Activated CD4-positive, alpha-beta T cell treated with anti-CD3 and anti-CD28 coated beads, Interleukin-2, amount 10 ng/mL, durations not matched to agents 24 days and 14 days (primary cell): ENCODE measurements at regions of chr22 and their contacts with region 1.

Region 1: DNA sequence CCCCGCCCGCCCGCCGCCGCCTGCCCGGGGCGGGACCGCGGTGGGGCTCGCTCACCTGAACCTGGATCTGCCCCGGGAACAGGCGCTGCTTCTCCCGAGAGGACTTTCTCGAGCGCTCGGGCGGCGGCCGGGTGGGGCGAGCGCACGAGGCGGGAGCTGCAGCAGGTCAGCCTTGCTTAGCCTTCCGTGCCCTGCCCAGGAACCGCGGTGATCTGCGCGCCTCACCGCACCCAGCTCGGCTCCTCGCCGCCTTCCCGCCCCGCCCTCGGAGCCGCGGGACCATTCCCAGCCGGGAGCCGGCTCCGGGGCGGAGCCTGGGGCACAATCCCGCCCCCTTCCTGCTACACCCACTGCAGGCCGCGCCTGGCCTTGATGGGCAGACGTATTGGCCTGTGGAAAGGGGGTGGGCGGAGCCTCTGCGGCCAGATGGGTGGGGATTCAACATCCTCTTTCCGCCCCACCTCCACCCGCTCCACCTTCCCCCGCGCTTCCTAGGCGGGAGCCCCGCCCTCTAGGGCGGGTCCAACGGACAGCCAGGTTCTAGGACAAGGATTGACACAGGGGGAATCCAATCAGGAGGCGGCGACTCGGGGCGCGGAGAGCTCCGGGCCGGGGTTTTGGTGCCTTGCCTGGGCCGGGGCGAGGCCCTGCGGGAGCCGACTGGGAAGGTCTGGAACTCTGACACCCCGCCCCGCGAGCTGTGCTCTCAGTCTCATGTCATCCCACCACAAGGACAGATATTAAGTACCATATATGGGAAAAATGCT is at the start of gene MYH9:
- DNase-seq: peak; percentile 100
- H3K4me3 Mint-ChIP-seq: peak within 1 kb of the TSS; percentile 95
- H3K27ac Mint-ChIP-seq: peak within 1 kb of the TSS; percentile 97
- H3K4me1 Mint-ChIP-seq: peaks cover 36% of the 10 kb centered on the region
- H3K27me3 Mint-ChIP-seq: no peaks in the 10 kb centered on the region
- total RNA-seq, gene MYH9: 625 and 633 TPM in 2 replicates

Region 2: DNA sequence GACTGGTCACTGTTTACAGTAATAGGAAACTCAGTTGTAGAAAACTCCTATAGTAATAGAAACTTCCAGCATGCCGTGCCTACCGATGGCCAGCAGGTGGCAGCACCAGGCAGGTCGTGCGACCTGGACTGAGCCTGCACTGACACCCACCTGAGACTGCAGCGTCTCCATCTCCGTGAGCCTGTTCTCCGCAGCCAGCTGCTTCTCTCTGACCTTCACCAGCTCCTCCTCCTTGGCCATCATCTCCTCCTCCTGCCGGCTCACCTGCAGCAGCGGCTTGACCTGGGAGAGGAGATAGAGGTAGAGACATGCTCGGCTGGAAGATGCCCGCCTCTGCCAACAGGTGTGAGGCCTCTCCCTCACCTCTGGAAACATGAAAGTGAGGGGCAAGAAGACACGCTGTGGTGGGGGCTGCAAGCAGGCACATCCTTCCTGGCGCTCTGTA is 86.5 kb before region 1 on chr22:
- intact Hi-C with region 1: loop called (anchors 1 kb)
- DNase-seq: peak; percentile 94
- H3K4me3 Mint-ChIP-seq: no peak overlapping the region
- H3K27ac Mint-ChIP-seq: peak overlapping the region; percentile 34
- H3K4me1 Mint-ChIP-seq: peaks cover 8% of the 10 kb centered on the region
- H3K27me3 Mint-ChIP-seq: no peaks in the 10 kb centered on the region

Region 3: GRCh38 chr22:36365020-36365411 is 22.9 kb before region 1 on chr22:
- intact Hi-C with region 1: loop called (anchors 1 kb)
- DNase-seq: peak; percentile 95
- H3K4me3 Mint-ChIP-seq: peak overlapping the region; percentile 79
- H3K27ac Mint-ChIP-seq: peak overlapping the region; percentile 89
- H3K4me1 Mint-ChIP-seq: peaks cover 83% of the 10 kb centered on the region
- H3K27me3 Mint-ChIP-seq: no peaks in the 10 kb centered on the region

Region 4: DNA sequence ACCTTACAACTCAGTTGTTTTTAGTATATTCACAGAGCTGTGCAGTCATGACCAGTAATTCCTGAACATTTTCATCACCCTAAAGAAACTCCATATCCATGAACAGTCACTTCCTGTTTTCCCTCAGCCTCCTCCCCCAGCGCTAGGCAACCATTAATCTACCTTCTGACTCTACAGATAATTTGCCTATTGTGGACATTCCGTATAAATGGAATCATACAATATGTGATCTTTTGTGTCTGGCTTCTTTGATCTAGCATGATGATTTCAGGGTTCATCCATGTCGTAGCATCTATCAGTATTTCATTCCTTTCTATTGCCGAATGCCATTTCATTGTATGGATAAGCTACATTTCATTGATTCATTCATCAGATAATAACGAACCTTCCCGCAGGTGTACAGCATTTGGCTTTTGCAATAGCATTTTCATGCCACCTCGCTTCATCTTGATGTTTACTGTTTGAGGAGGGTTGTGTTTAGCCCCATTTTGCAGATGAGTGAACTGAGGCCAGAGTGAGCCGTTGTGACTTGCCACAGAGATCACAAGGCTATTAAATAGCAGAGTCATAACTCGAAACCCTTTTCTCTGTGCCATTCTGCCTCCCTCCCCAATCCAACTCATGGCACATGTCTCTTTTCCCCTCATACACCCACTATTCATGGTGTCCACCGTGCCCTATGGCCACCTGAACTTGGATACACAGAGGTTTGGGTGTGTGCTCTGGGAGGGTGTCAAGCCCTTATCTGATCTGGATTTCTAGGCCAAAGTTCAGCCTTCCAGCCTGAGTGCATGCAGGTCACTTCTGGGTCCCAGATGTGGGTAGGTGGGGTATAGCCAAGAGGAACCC is 10.9 kb after region 1 on chr22:
- intact Hi-C with region 1: no loop called
- DNase-seq: no peak
- H3K4me3 Mint-ChIP-seq: no peak overlapping the region
- H3K27ac Mint-ChIP-seq: no peak overlapping the region
- H3K4me1 Mint-ChIP-seq: peaks cover 7% of the 10 kb centered on the region
- H3K27me3 Mint-ChIP-seq: no peaks in the 10 kb centered on the region

Region 5: DNA sequence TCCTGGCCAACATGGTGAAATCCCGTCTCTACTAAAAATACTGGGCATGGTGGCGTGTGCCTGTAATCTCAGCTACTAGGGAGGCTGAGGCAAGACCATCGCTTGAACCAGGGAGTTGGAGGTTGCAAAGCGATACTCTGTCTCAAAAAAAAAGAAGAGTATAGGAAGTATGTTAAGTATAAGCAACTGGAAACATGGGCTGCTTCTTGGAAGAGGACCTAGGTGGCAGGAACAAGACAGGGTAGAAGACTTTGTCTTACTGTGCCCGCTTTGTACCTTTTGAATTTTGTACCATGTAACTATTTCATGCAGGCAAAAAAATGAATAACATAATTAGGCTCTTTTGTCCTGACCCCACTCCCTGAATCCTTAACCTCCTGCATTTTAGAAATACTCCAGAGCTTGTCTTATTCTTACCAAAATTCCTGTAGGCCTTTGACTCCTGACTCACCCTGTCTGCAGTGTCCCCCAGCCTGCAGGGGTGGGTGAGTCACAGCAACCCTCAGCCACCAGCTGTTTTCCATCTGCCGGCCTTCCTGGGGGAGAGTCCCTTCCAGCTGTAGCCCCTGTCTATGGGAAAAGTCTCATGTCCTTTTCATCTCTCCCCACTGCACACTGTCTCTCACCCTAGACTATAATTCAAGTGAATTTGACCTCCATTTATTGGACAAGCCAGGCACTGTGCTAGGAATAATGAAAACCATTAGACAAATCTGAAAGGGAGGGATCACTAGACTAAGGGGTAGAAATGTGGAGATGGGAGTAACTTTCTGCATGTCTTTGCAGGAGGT is 51.7 kb after region 1 on chr22:
- intact Hi-C with region 1: loop called (anchors 5 kb)
- DNase-seq: no peak
- H3K4me3 Mint-ChIP-seq: no peak overlapping the region
- H3K27ac Mint-ChIP-seq: no peak overlapping the region
- H3K4me1 Mint-ChIP-seq: peaks cover 32% of the 10 kb centered on the region
- H3K27me3 Mint-ChIP-seq: no peaks in the 10 kb centered on the region

Region 6: GRCh38 chr22:36470162-36470993 is 82.4 kb after region 1 on chr22:
- intact Hi-C with region 1: loop called (anchors 1 kb)
- DNase-seq: peak; percentile 95
- H3K4me3 Mint-ChIP-seq: peak overlapping the region; percentile 23
- H3K27ac Mint-ChIP-seq: peak overlapping the region; percentile 48
- H3K4me1 Mint-ChIP-seq: peaks cover 22% of the 10 kb centered on the region
- H3K27me3 Mint-ChIP-seq: no peaks in the 10 kb centered on the region

Region 7: DNA sequence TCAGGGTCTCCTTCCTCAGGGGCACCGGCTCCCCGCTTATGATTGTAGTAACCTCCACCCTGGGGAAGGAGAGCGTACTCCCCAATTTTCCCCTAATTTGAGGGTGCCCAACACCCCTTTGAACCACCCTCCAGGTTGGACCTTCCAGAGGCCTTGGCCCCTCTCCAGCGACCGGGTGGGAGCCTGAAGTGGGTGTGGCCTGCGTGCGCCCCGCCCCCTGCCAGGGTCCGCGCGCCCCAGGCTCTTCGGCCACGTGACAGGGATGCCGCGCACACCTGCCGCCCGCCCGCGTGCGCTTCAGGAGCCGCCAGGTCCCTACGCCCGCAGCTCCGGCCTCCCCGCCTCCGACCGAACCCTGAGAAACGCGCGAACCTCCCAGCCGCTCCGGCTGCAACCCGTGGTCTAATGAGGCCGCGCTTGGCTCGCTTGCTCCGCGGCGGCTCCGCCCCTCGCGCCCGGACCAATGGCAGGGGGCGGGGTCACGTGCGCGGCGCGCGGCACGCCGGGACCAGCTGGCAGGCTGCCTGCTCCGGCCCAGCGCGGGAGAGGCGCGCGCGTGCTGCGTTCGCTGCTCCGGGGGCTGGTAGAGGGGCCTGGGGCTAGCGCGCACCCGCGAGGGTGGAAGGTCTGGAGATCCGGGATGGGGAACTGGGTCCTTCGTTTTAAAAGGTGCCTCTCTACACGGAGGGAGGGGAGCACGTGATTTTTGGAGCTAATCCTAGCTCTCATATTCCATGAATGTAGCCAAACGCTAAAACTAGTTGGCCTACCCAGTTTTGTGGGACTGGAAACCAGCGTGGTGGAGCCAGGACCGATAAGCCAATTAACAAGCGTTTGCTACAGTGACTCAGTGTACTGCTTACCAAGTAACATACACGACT is 118.9 kb after region 1 on chr22 and contains the start of gene FOXRED2:
- intact Hi-C with region 1: no loop called
- DNase-seq: peak; percentile 98
- H3K4me3 Mint-ChIP-seq: peak within 1 kb of the TSS; percentile 70
- H3K27ac Mint-ChIP-seq: peak within 1 kb of the TSS; percentile 70
- H3K4me1 Mint-ChIP-seq: peaks cover 10% of the 10 kb centered on the region
- H3K27me3 Mint-ChIP-seq: no peaks in the 10 kb centered on the region
- total RNA-seq, gene FOXRED2: 25.4 and 26.3 TPM in 2 replicates

Region 8: GRCh38 chr22:36528795-36529751 is 141.1 kb after region 1 on chr22 and contains the start of gene EIF3D:
- intact Hi-C with region 1: loop called (anchors 1 kb)
- DNase-seq: peak; percentile 99
- H3K4me3 Mint-ChIP-seq: peak within 1 kb of the TSS; percentile 93
- H3K27ac Mint-ChIP-seq: peak within 1 kb of the TSS; percentile 99
- H3K4me1 Mint-ChIP-seq: peaks cover 19% of the 10 kb centered on the region
- H3K27me3 Mint-ChIP-seq: peaks cover 3% of the 10 kb centered on the region
- total RNA-seq, gene EIF3D: 353 and 367 TPM in 2 replicates